Activated CD4-positive, alpha-beta memory T cell treated with anti-CD3 and anti-CD28 coated beads for 36 hours (primary cell): ENCODE measurements at regions of chr2 and their contacts with region 1.

Region 1: DNA sequence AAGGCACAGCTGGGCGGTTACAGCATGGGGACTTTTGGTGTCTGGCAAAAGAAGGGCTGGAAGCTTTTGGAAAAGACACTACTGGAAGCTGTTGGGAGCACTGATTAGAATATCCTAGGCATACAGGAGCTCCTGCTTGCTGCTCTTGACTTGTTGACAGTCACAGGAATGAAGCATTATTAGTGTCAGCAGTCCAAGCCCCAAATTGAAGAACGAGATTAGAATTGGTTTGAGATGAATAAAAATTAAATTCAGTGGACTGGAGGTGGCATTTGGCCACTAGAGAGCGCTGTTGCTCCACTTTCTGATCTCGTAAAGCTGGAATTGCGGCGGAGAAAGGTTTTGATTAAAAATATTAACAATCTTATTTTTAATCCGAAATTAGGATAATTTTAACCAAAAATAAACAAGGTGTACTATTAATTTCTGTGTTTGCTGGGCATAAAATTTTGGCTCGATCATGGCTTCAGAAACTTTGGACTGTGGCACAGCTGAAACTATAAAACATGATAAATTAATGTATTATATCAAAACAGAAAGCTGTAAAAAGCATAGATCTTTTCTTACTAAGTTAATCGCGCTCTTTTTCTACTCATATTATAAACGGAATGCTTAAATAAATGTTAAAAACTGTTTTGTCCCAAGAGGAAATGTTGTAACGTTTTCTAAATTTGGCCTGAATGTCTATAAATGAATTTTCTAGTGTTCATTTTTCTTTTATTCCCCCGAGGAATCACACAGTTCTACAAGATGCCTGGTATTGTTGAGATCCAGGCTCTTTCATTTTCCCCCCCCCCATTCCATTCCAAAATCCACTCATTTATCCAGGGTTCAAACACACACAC is 2.4 kb upstream of the HOXD8 start:
- DNase-seq: peak; percentile 67
- H3K4me3 Mint-ChIP-seq: no peak overlapping the region
- H3K27ac Mint-ChIP-seq: no peak overlapping the region
- H3K4me1 Mint-ChIP-seq: peaks cover 28% of the 10 kb centered on the region
- H3K27me3 Mint-ChIP-seq: peaks cover 74% of the 10 kb centered on the region

Region 2: GRCh38 chr2:175964195-175964594 is 163.0 kb before region 1 on chr2:
- CTCF ChIA-PET with region 1: no interaction called
- POLR2A ChIA-PET with region 1: no interaction called
- intact Hi-C with region 1: no loop called
- DNase-seq: no peak
- H3K4me3 Mint-ChIP-seq: no peak overlapping the region
- H3K27ac Mint-ChIP-seq: no peak overlapping the region
- H3K4me1 Mint-ChIP-seq: no peaks in the 10 kb centered on the region
- H3K27me3 Mint-ChIP-seq: no peaks in the 10 kb centered on the region

Region 3: DNA sequence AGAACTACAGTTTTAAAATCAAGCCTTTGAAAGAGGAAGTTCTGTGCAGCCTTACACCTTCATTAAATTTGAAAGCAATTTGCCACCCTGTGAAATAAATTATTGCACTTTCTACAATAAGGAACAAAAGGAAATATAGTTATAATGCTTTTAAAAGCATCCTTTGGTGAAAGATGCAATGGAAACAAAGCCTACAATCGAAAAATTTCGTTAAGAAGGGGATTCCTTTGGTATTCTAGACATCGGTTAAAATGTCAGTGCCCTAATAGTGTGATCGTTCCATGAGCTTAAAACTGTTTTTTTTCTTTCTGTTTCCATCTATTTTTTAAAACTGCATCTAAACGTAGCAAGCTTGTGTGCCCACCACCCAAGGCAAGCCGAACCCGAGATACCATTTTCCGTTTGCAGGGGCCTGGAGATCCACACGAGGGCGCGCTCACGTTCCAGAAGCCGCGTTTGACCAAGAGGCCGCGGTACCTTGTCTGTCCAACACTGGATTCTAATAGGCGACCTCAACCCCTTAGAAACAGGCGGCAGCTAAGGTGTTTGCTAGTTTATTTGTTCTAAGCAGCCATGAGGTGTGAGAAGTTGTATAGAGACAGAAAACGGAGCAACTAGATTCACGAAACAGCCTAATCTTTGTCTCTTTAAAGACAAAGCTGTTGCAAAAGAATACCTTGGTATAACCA is 16.0 kb before region 1 on chr2:
- CTCF ChIA-PET with region 1: interaction called, 13 read pairs
- POLR2A ChIA-PET with region 1: no interaction called
- intact Hi-C with region 1: no loop called
- DNase-seq: peak; percentile 49
- H3K4me3 Mint-ChIP-seq: peak overlapping the region; percentile 8
- H3K27ac Mint-ChIP-seq: no peak overlapping the region
- H3K4me1 Mint-ChIP-seq: peaks cover 14% of the 10 kb centered on the region
- H3K27me3 Mint-ChIP-seq: peaks cover 80% of the 10 kb centered on the region

Region 4: DNA sequence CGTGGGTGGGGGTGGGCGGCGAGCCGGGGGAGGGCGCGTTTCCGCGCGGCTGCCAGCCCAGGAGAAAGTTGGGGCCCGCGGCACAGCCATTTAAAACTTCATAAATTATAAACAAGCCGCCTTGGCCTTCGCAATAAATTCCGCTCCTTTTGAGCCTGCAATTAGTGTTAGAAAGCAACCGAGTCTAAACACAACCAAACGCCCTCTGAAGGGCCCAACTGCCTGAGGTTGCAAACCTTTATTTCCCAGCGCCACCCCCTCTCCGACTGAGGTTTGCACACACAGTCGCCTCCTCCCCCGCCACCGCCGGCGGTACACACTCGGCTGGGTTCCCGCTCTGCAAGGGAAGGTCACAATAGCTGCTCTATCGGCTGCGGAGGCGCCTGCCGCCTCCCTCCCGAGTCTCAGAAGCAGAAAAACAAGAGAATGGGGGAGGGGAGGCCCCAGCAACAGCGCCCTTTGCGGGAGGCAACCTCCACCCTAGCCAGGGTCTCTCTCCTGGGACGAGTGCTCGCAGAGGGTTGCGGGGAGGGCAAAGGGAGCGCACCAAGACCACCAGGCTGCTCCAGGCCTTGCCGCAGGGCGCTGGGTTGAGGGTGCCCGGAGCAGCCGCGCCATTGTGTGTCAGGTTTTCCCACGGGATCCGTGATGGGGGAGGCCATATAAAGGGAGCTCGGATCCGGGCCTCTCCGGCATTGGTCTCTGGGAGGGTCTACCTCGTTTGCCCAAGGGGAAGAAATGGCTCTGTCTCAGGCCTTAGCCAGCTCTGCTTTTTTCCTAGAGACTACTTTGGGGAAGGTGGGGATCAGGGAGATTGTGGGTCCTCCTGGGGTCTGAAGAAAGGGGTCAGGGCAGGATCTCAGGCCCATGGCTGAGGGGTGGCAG is 47.9 kb after region 1 on chr2:
- CTCF ChIA-PET with region 1: interaction called, 8 read pairs
- POLR2A ChIA-PET with region 1: no interaction called
- intact Hi-C with region 1: loop called (anchors 5 kb)
- DNase-seq: peak; percentile 34
- H3K4me3 Mint-ChIP-seq: no peak overlapping the region
- H3K27ac Mint-ChIP-seq: no peak overlapping the region
- H3K4me1 Mint-ChIP-seq: peaks cover 23% of the 10 kb centered on the region
- H3K27me3 Mint-ChIP-seq: peaks cover 78% of the 10 kb centered on the region

Region 5: GRCh38 chr2:176554101-176555048 is 427.2 kb after region 1 on chr2:
- CTCF ChIA-PET with region 1: interaction called, 21 read pairs
- POLR2A ChIA-PET with region 1: no interaction called
- intact Hi-C with region 1: loop called (anchors 2 kb)
- DNase-seq: peak; percentile 36
- H3K4me3 Mint-ChIP-seq: peak overlapping the region; percentile 66
- H3K27ac Mint-ChIP-seq: no peak overlapping the region
- H3K4me1 Mint-ChIP-seq: peaks cover 9% of the 10 kb centered on the region
- H3K27me3 Mint-ChIP-seq: peaks cover 53% of the 10 kb centered on the region

Region 6: DNA sequence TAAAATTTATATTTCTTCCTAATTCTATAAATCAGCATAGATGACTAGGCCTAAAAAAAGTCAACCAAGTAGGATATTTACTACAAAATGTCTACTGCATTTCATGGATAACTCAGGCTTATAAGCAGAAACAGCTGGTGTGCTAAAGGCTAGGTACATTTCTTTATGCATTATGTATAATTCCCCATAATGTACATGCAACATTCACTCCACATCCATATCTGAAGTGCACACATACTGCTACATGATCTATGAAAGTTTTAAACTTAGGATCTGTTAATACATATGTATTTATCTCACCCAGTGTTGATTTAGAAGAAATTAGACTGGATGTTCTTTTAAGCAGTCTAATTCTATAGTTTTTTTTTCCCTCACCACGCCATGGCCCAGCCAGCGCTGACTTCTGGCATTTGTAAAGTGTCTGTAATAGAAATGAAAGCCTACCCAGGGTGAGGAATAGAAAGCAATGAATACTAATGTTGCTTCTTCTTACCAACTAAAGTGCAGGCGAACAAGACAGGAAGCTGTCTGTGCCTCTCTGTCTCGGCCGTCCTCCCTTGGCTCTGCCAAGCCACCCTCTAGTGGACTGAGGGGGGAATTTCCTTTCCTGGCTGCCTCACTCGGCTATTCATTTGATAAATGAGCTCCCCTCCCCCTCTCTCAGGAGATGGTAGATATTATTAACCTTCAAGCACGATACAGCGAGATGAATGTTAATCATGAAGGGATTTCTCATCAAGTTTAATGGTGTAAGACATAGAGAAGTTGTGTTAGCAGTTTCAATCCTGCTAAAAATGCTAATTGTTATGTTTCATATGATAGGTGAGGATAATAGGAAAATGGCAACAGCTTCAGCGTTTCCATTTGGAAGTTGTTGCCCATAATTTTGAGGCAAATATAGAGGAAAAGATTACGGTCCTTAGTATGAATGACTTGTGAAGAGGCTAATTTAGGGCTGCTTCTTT is 526.6 kb after region 1 on chr2:
- CTCF ChIA-PET with region 1: interaction called, 62 read pairs
- POLR2A ChIA-PET with region 1: no interaction called
- intact Hi-C with region 1: loop called (anchors 1 kb)
- DNase-seq: peak; percentile 50
- H3K4me3 Mint-ChIP-seq: no peak overlapping the region
- H3K27ac Mint-ChIP-seq: no peak overlapping the region
- H3K4me1 Mint-ChIP-seq: peaks cover 2% of the 10 kb centered on the region
- H3K27me3 Mint-ChIP-seq: peaks cover 35% of the 10 kb centered on the region

Region 7: GRCh38 chr2:177148477-177149154 is 1021.5 kb after region 1 on chr2:
- CTCF ChIA-PET with region 1: interaction called, 46 read pairs
- POLR2A ChIA-PET with region 1: no interaction called
- intact Hi-C with region 1: loop called (anchors 1 kb)
- DNase-seq: peak; percentile 81
- H3K4me3 Mint-ChIP-seq: peak overlapping the region; percentile 78
- H3K27ac Mint-ChIP-seq: no peak overlapping the region
- H3K4me1 Mint-ChIP-seq: peaks cover 12% of the 10 kb centered on the region
- H3K27me3 Mint-ChIP-seq: peaks cover 20% of the 10 kb centered on the region